GM23248 (cell line): ENCODE measurements at regions of chr7 and their contacts with region 1.

Region 1: DNA sequence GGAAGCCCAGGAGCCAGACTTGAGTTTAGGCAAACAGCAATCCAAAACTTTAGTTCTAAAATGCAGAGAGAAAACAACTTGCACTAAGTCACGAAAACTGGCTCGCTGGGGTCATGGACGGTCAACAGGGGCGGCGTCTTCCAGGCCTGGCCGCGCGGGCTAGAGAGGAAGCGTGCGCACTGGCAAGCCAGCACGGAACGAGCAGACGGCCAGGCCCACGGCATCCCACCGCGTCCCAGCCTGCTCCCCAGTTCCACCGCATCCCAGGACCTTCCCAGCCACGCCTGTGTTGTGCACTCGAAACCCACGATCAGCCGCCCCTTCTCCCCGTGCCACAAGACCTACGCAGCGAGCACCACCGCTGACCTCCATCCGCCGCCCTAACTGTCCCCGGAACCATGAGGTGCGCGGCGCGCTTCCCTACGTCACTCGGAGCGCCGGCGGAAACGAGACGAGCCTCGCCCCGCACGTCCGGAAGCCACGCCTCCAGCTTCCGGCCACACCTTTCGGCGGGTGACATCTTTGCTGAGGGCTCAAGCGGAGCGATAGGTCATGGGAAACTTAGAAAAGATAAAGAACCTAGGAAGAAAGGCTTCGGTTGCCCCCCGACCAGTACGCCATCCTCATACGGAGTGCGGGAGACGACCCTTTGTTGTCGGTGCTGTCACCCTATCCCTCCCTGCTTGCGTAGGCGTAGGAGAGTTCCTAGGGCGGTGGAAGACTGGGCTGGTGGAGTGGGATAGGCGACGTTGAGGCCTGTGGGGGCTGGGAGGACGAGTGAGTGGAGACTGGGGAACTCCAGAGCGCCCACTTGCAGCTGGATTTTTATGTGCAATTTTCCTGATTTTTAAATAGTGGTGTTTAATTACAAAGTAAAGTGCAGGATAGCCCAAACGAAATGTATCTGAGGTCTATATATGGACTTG is at the start of gene TBRG4:
- DNase-seq: peak; percentile 98
- H3K4me3 ChIP-seq: peak within 1 kb of the TSS; percentile 86
- H3K27ac ChIP-seq: peak within 1 kb of the TSS; percentile 95
- H3K4me1 ChIP-seq: peaks cover 11% of the 10 kb centered on the region
- H3K27me3 ChIP-seq: no peaks in the 10 kb centered on the region
- total RNA-seq, gene TBRG4: 60.4 and 62.7 TPM in 2 replicates

Region 2: DNA sequence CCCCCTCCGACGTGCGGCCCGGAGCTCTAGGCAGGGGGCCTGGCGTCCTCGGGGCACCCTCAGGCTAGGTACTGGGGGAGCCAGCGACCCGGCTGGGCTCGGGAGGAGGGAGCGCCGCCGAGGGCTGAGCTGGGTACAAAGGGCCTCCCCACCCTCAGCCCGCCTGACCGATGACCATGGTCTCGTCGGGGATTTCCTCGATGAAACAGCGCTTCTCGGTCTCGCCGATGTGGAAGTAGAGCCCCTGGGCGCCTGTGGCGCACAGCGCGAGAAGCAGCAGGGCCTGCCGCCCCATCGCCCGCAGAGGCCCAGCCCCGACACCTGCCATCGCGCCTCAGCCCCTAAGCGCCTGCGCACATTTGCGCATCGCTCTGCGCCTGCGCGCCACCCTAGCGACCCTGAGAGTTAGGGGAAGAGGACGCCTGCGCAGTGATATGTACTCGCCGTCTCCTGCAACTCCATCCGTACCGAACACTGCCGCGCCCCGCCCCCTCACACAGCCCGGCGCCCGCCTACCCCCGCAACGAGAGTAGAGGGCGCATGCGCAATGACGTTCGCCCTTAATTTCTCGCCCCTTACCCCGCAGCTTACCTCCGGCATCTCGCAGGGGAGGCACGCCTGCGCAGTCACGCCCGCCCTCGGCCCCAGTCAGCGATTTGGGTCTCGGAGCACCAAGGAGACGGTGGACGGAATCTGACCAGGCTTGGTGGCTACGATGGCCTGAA is 529.5 kb before region 1 on chr7 and contains the start of gene TMED4:
- in situ Hi-C with region 1: loop called (anchors 25 kb)
- DNase-seq: peak; percentile 99
- H3K4me3 ChIP-seq: peak within 1 kb of the TSS; percentile 87
- H3K27ac ChIP-seq: peak within 1 kb of the TSS; percentile 94
- H3K4me1 ChIP-seq: peaks cover 7% of the 10 kb centered on the region; the same call in 1 of the 2 replicates
- H3K27me3 ChIP-seq: no peaks in the 10 kb centered on the region
- total RNA-seq, gene TMED4: 174 and 201 TPM in 2 replicates

Region 3: GRCh38 chr7:45902820-45903219 is 791.3 kb after region 1 on chr7:
- in situ Hi-C with region 1: no loop called
- DNase-seq: no peak
- H3K4me3 ChIP-seq: no peak overlapping the region
- H3K27ac ChIP-seq: no peak overlapping the region
- H3K4me1 ChIP-seq: peaks cover 6% of the 10 kb centered on the region; the same call in 1 of the 2 replicates
- H3K27me3 ChIP-seq: no peaks in the 10 kb centered on the region; the same call in 1 of the 2 replicates